ENCODE measurements at regions of chr10 and their contacts with region 1.

Region 1: GRCh38 chr10:69716711-69717560 is 84.8 kb upstream of the COL13A1 start:
- DNase-seq: peak; percentile 46 to 93
- H3K4me3 ChIP-seq: no peak overlapping the region
- H3K27ac ChIP-seq: no peak overlapping the region
- H3K4me1 ChIP-seq: peaks cover 0 to 2% (median under 1%) of the 10 kb centered on the region in 4 experiments; a peak in 3 of 7 replicates
- H3K27me3 ChIP-seq: no peaks in the 10 kb centered on the region
- CTCF ChIP-seq: peak; percentile 81 to 98 (median 89)
- EP300 ChIP-seq: no peak
- POLR2A ChIP-seq: no peak
- RAD21 ChIP-seq: peak; percentile 96 to 99

Region 2: GRCh38 chr10:69678005-69678654 is 38.8 kb before region 1 on chr10:
- CTCF ChIA-PET with region 1: interaction called, 260 read pairs
- POLR2A ChIA-PET with region 1: no interaction called
- DNase-seq: no peak
- H3K4me3 ChIP-seq: no peak overlapping the region
- H3K27ac ChIP-seq: no peak overlapping the region
- H3K4me1 ChIP-seq: peaks cover 0 to 4% (median 0%) of the 10 kb centered on the region in 4 experiments; a peak in 1 of 7 replicates
- H3K27me3 ChIP-seq: no peaks in the 10 kb centered on the region
- CTCF ChIP-seq: no peak
- EP300 ChIP-seq: no peak
- POLR2A ChIP-seq: no peak
- RAD21 ChIP-seq: no peak

Region 3: GRCh38 chr10:69696073-69696731 is 20.7 kb before region 1 on chr10:
- CTCF ChIA-PET with region 1: interaction called, 260 read pairs
- POLR2A ChIA-PET with region 1: interaction called, 3 read pairs
- DNase-seq: peak; percentile 23 to 58
- H3K4me3 ChIP-seq: no peak overlapping the region
- H3K27ac ChIP-seq: no peak overlapping the region
- H3K4me1 ChIP-seq: no peaks in the 10 kb centered on the region
- H3K27me3 ChIP-seq: no peaks in the 10 kb centered on the region; a peak in 1 of 7 replicates
- CTCF ChIP-seq: peak; percentile 43 to 73 (median 61)
- EP300 ChIP-seq: no peak
- POLR2A ChIP-seq: no peak
- RAD21 ChIP-seq: peak; percentile 45 to 60; a peak in 3 of 4 replicates

Region 4: DNA sequence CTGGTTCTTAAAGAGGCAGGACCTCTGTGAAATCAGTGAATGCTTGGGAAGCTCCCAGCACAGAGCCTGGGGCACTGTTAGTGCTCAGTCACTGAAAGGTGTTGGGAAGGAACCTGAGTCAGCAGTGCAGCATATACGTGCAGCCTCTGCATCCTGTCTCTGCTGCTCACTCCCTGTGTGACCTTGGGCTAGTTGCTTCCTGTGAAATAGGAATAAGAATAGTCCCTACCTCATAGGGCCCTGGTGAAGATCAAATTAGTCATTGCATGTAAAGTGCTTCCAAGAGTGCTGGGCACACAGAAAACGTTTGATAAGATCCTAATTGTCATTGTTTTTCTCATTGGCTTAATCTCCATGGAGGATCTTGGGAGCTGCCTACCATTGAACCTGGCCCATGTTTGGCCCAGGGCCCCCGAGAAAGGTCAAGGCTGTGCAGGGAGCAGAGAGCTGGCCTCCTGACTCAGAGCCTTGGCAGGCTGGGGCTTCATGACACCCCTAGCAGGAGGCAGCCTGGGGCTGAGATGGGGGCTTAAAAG is 11.5 kb after region 1 on chr10:
- CTCF ChIA-PET with region 1: interaction called, 46 read pairs
- POLR2A ChIA-PET with region 1: interaction called, 3 read pairs
- DNase-seq: peak in 1 of 2 experiments; percentile 33
- H3K4me3 ChIP-seq: no peak overlapping the region
- H3K27ac ChIP-seq: no peak overlapping the region
- H3K4me1 ChIP-seq: peaks cover 0 to 10% (median 4%) of the 10 kb centered on the region in 4 experiments; a peak in 4 of 7 replicates
- H3K27me3 ChIP-seq: no peaks in the 10 kb centered on the region; a peak in 1 of 7 replicates
- CTCF ChIP-seq: no peak
- EP300 ChIP-seq: no peak
- POLR2A ChIP-seq: no peak
- RAD21 ChIP-seq: no peak

Region 5: GRCh38 chr10:69769395-69769992 is 52.6 kb after region 1 on chr10:
- CTCF ChIA-PET with region 1: interaction called, 11 read pairs
- POLR2A ChIA-PET with region 1: no interaction called
- DNase-seq: peak; percentile 34 to 65
- H3K4me3 ChIP-seq: no peak overlapping the region
- H3K27ac ChIP-seq: no peak overlapping the region
- H3K4me1 ChIP-seq: peaks cover 0 to 11% (median 3%) of the 10 kb centered on the region in 4 experiments; a peak in 4 of 7 replicates
- H3K27me3 ChIP-seq: peaks cover 0 to 5% (median 0%) of the 10 kb centered on the region in 4 experiments; a peak in 1 of 7 replicates
- CTCF ChIP-seq: no peak
- EP300 ChIP-seq: no peak
- POLR2A ChIP-seq: no peak
- RAD21 ChIP-seq: no peak